ENCODE measurements at regions of chr12 and their contacts with region 1.

Region 1: GRCh38 chr12:6605421-6606292 is 1.5 kb downstream of the CHD4 start:
- DNase-seq: no peak
- H3K4me3 ChIP-seq: peak overlapping the region; percentile 74
- CTCF ChIP-seq: no peak

Region 2: GRCh38 chr12:6582196-6582595 is 23.5 kb before region 1 on chr12:
- CTCF ChIA-PET with region 1: interaction called, 11 read pairs
- POLR2A ChIA-PET with region 1: no interaction called
- DNase-seq: no peak
- H3K4me3 ChIP-seq: no peak overlapping the region
- CTCF ChIP-seq: no peak

Region 3: GRCh38 chr12:6667627-6668100 is 62.0 kb after region 1 on chr12:
- CTCF ChIA-PET with region 1: no interaction called
- POLR2A ChIA-PET with region 1: no interaction called
- DNase-seq: no peak
- H3K4me3 ChIP-seq: no peak overlapping the region
- CTCF ChIP-seq: peak; percentile 0

Measured in AG04449 (cell line).